OCI-LY7 (cell line): ENCODE measurements at regions of chr7 and their contacts with region 1.

Region 1: DNA sequence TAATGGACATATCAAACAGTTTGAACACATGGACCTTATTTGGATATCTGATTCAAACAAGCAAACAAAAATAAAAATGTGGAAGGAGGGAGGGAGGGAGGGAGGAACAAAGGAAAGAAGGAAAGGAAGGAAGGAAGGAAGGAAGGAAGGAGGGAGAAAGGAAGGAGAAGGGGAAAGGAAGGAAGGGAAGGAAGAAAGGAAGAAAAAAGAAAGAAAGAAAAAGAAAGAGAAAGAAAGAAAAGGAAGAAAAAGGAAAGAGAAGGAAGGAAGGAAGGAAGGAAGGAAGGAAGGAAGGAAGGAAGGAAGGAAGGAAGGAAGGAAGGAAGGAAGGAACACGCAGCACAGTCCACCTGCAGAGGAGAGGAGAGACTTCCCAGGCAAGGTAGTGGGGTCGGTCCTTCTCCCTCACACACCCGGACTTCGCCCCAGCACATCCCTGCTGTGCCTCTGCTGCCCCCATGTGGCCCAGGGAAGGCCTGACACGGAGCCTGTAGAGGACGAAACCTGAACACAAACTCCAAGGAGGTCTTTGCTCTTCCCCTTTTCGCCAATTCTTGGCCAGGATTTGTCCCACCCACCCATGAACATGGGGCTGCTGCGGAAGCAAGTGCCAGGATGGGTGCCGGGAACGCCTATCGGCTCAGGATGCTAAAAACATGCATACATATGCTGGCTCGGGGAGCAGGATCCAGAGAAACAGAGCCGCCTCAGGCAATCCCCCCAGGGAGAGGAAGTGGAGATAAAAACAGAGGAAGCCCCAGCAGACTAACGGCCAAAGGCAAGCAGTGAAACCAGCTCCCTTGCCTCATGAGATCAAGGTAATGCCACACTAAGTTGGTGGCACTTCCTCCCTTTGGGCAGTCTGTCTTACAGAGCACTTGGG is 52.3 kb upstream of the DGKI start:
- DNase-seq: peak; percentile 75
- H3K4me3 ChIP-seq: peak overlapping the region; percentile 22
- H3K27ac ChIP-seq: peak overlapping the region; percentile 37
- H3K4me1 ChIP-seq: peaks cover 20% of the 10 kb centered on the region
- CTCF ChIP-seq: peak; percentile 88

Region 2: DNA sequence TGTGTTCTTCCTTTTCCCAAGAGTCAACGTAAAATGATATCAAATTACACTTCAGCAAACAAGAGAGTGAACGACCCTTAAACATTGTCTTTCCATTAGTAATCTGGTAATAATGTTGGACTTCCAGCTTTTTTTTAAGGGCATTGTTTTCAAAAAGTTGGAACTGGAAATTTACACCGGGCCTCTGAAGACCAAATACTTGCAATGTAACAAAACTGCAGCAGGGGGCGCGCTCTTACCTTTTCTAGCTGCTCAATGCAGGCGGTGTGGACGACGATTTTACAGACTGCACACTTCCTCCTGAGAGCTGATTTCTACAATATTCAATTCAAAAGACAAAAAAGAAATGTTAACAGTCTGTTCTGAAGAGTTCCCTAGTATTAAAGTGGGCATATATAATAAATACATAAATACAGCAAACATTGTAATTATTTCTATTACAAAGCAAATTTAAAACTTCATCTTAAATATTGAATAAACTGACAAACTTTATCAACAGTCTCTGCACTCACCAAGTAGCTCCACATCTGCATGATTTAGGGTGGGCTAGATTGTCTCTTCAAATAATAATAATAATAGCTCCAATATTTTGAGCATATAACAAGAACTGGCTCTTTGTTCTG is 242.7 kb before region 1 on chr7:
- CTCF ChIA-PET with region 1: no interaction called
- POLR2A ChIA-PET with region 1: no interaction called
- intact Hi-C with region 1: loop called (anchors 1 kb)
- DNase-seq: peak; percentile 71
- H3K4me3 ChIP-seq: no peak overlapping the region
- H3K27ac ChIP-seq: no peak overlapping the region
- H3K4me1 ChIP-seq: no peaks in the 10 kb centered on the region
- CTCF ChIP-seq: peak; percentile 97

Region 3: DNA sequence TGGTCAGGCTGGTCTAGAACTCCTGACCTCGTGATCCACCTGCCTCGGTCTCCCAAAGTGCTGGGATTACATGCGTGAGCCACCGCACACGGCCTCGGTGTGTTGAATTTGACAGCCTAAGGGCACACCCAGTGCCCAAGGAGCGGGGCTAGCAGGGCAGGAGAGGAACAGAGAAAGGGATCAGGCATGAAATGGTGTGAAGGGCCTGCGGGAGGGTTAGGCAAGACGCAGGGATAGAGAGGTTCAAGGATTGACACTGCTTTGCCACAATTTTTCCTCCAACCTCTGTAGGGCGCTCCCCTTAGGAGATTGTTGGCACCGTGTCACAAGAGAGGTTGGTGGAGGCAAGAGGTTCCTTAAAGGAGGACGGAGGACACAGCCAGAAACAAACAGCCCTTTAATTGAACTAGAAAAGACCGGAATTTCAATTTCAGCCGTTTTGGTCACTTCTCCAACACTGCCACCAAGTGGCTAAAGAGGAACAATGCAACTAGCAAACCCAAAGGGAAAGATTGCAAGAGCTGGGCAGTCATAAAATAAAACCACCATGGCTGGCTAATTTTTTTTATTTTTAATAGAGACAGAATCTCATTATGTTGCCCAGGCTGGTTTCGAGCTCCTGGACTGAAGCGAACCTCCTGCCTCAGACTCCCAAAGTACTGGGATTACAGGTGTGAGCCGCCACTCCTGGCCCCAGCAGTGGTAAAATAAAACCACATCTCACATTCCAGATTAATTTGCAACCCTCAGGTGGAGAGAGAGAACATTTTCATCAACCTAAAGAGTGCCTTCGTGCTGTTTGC is 109.7 kb after region 1 on chr7:
- CTCF ChIA-PET with region 1: interaction called, 3 read pairs
- POLR2A ChIA-PET with region 1: interaction called, 15 read pairs
- intact Hi-C with region 1: loop called (anchors 1 kb)
- DNase-seq: peak; percentile 77
- H3K4me3 ChIP-seq: no peak overlapping the region
- H3K27ac ChIP-seq: no peak overlapping the region
- H3K4me1 ChIP-seq: no peaks in the 10 kb centered on the region
- CTCF ChIP-seq: peak; percentile 91